PC-3 (cell line): ENCODE measurements at regions of chr7 and their contacts with region 1.

Region 1: GRCh38 chr7:16982640-16983350 is 101.0 kb upstream of the AGR3 start:
- DNase-seq: peak; percentile 64
- ATAC-seq: no peak
- H3K4me3 ChIP-seq: no peak overlapping the region
- H3K27ac ChIP-seq: peak overlapping the region; percentile 23
- H3K4me1 ChIP-seq: peaks cover 43% of the 10 kb centered on the region
- H3K27me3 ChIP-seq: no peaks in the 10 kb centered on the region
- CTCF ChIP-seq: peak; percentile 93

Region 2: GRCh38 chr7:16326106-16326505 is 656.7 kb before region 1 on chr7:
- CTCF ChIA-PET with region 1: no interaction called
- POLR2A ChIA-PET with region 1: no interaction called
- intact Hi-C with region 1: no loop called
- DNase-seq: no peak
- ATAC-seq: no peak
- H3K4me3 ChIP-seq: no peak overlapping the region
- H3K27ac ChIP-seq: no peak overlapping the region
- H3K4me1 ChIP-seq: no peaks in the 10 kb centered on the region
- H3K27me3 ChIP-seq: no peaks in the 10 kb centered on the region
- CTCF ChIP-seq: no peak

Region 3: DNA sequence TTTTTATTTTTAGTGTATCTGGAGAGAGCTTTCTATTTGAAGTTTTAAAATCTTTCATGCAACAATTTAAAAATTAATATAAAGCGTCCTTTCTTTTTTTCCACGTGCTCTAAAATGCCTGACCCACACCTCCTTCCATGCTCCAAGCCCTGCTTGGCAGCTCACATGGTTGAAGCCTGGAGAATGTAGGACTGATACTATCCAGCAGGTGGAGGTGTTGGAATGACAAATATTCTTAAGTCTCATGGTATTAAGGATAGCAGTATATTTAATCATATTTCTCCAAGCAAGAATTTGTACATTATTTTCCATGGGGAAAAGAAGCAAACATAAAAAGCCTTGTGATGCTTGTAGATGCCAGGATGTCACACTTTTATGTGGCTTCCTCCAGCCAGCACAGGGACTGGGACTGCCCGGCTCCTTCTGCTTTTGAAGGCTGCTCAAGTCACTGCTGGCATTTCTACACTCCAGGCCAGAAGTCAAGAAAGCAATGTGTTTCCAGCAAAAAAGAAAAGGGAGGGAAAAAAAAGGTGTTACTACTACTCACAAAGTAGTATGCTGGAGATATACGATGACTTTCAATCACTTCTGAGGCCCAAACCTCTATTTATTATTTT is 287.1 kb before region 1 on chr7:
- CTCF ChIA-PET with region 1: no interaction called
- POLR2A ChIA-PET with region 1: no interaction called
- intact Hi-C with region 1: loop called (anchors 5 kb)
- DNase-seq: peak; percentile 80
- ATAC-seq: peak; percentile 69
- H3K4me3 ChIP-seq: no peak overlapping the region
- H3K27ac ChIP-seq: no peak overlapping the region
- H3K4me1 ChIP-seq: peaks cover 32% of the 10 kb centered on the region
- H3K27me3 ChIP-seq: no peaks in the 10 kb centered on the region
- CTCF ChIP-seq: peak; percentile 74

Region 4: GRCh38 chr7:16926283-16926682 is 56.5 kb before region 1 on chr7:
- CTCF ChIA-PET with region 1: interaction called, 4 read pairs
- POLR2A ChIA-PET with region 1: no interaction called
- intact Hi-C with region 1: loop called (anchors 1 kb)
- DNase-seq: peak; percentile 78
- ATAC-seq: peak; percentile 57
- H3K4me3 ChIP-seq: 0 out of 2 replicates have a peak overlapping the region, but pooled peaks have one; percentile 19
- H3K27ac ChIP-seq: peak overlapping the region; percentile 87
- H3K4me1 ChIP-seq: peaks cover 64% of the 10 kb centered on the region
- H3K27me3 ChIP-seq: no peaks in the 10 kb centered on the region
- CTCF ChIP-seq: peak; percentile 83

Region 5: GRCh38 chr7:17095001-17095574 is 112.3 kb after region 1 on chr7:
- CTCF ChIA-PET with region 1: no interaction called
- POLR2A ChIA-PET with region 1: no interaction called
- intact Hi-C with region 1: loop called (anchors 2 kb)
- DNase-seq: peak; percentile 97
- ATAC-seq: peak; percentile 83
- H3K4me3 ChIP-seq: no peak overlapping the region
- H3K27ac ChIP-seq: peak overlapping the region; percentile 94
- H3K4me1 ChIP-seq: peaks cover 62% of the 10 kb centered on the region
- H3K27me3 ChIP-seq: no peaks in the 10 kb centered on the region
- CTCF ChIP-seq: no peak

Region 6: GRCh38 chr7:17205910-17206905 is 223.4 kb after region 1 on chr7:
- CTCF ChIA-PET with region 1: interaction called, 15 read pairs
- POLR2A ChIA-PET with region 1: no interaction called
- intact Hi-C with region 1: no loop called
- DNase-seq: peak; percentile 93
- ATAC-seq: peak; percentile 98
- H3K4me3 ChIP-seq: no peak overlapping the region
- H3K27ac ChIP-seq: peak overlapping the region; percentile 97
- H3K4me1 ChIP-seq: peaks cover 27% of the 10 kb centered on the region
- H3K27me3 ChIP-seq: no peaks in the 10 kb centered on the region
- CTCF ChIP-seq: no peak

Region 7: DNA sequence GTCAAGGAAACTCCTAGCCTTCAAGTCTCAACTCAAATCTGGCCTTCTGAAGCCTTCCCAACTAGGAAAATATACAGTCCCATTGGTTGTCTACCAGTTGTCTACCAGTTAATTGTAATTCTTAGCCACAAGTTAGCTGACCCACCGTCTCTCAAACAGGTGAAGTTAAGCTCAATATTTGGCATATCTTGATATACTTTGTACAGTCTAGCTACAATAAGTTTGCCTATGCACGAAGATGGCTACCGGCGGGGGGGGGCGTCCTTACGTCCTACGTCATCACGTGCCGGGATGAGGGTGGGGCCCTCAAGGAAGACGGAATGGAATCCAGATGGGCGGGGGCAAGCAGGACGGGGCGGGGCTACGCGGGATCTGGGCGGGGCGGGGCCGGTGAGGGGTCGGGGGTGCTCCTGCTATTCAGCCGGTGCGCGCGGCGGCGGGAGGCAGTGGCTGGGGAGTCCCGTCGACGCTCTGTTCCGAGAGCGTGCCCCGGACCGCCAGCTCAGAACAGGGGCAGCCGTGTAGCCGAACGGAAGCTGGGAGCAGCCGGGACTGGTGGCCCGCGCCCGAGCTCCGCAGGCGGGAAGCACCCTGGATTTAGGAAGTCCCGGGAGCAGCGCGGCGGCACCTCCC is 315.5 kb after region 1 on chr7 and contains the start of gene AHR:
- CTCF ChIA-PET with region 1: interaction called, 5 read pairs
- POLR2A ChIA-PET with region 1: interaction called, 7 read pairs
- intact Hi-C with region 1: loop called (anchors 1 kb)
- DNase-seq: peak; percentile 89
- ATAC-seq: peak; percentile 72
- H3K4me3 ChIP-seq: peak within 1 kb of the TSS; percentile 94
- H3K27ac ChIP-seq: peak within 1 kb of the TSS; percentile 75
- H3K4me1 ChIP-seq: peaks cover 17% of the 10 kb centered on the region
- H3K27me3 ChIP-seq: no peaks in the 10 kb centered on the region
- CTCF ChIP-seq: no peak
- total RNA-seq, gene AHR: 62.5 and 72.7 TPM in 2 replicates

Region 8: GRCh38 chr7:17370092-17370491 is 387.3 kb after region 1 on chr7:
- CTCF ChIA-PET with region 1: no interaction called
- POLR2A ChIA-PET with region 1: no interaction called
- intact Hi-C with region 1: no loop called
- DNase-seq: peak; percentile 76
- ATAC-seq: no peak
- H3K4me3 ChIP-seq: no peak overlapping the region
- H3K27ac ChIP-seq: peak overlapping the region; percentile 93
- H3K4me1 ChIP-seq: peaks cover 39% of the 10 kb centered on the region
- H3K27me3 ChIP-seq: no peaks in the 10 kb centered on the region
- CTCF ChIP-seq: no peak

Region 9: GRCh38 chr7:17559388-17559787 is 576.6 kb after region 1 on chr7:
- CTCF ChIA-PET with region 1: no interaction called
- POLR2A ChIA-PET with region 1: no interaction called
- intact Hi-C with region 1: loop called (anchors 2 kb)
- DNase-seq: peak; percentile 85
- ATAC-seq: peak; percentile 60
- H3K4me3 ChIP-seq: peak overlapping the region; percentile 48
- H3K27ac ChIP-seq: peak overlapping the region; percentile 99
- H3K4me1 ChIP-seq: peaks cover 49% of the 10 kb centered on the region
- H3K27me3 ChIP-seq: no peaks in the 10 kb centered on the region
- CTCF ChIP-seq: no peak